ENCODE measurements at regions of chr12 and their contacts with region 1.

Region 1: GRCh38 chr12:112130441-112130998 is 5.2 kb downstream of the TRAFD1 start:
- DNase-seq: peak; percentile 70
- ATAC-seq: peak; percentile 67
- H3K4me3 ChIP-seq: peak overlapping the region; percentile 43
- H3K27ac ChIP-seq: peak overlapping the region; percentile 72
- H3K4me1 ChIP-seq: peaks cover 16% of the 10 kb centered on the region
- H3K27me3 ChIP-seq: no peaks in the 10 kb centered on the region
- CTCF ChIP-seq: no peak
- EP300 ChIP-seq: no peak
- POLR2A ChIP-seq: no peak
- RAD21 ChIP-seq: no peak

Region 2: GRCh38 chr12:112012775-112013600 is 117.5 kb before region 1 on chr12 and contains the starts of genes ERP29 and TMEM116:
- CTCF ChIA-PET with region 1: interaction called, 4 read pairs
- POLR2A ChIA-PET with region 1: interaction called, 17 read pairs
- RAD21 ChIA-PET with region 1: interaction called, 24 read pairs
- SMC1A ChIA-PET with region 1: interaction called, 28 read pairs
- in situ Hi-C with region 1: no loop called
- intact Hi-C with region 1: loop called (anchors 5 kb)
- DNase-seq: peak; percentile 98
- ATAC-seq: peak; percentile 82
- H3K4me3 ChIP-seq: peak within 1 kb of the TSS; percentile 97
- H3K27ac ChIP-seq: peak within 1 kb of the TSS; percentile 97
- H3K4me1 ChIP-seq: peaks cover 16% of the 10 kb centered on the region; the same call in 1 of the 2 replicates
- H3K27me3 ChIP-seq: no peaks in the 10 kb centered on the region
- CTCF ChIP-seq: peak; percentile 45 to 58 (median 50); a peak in 5 of 6 replicates
- EP300 ChIP-seq: 0 out of 4 replicates have a peak, but pooled peaks of 1 of the 2 experiments have one; percentile 10
- POLR2A ChIP-seq: peak; percentile 89
- RAD21 ChIP-seq: peak; percentile 34
- polyA plus RNA-seq, gene ERP29: 47.1 to 119 TPM
- polyA plus RNA-seq, gene TMEM116: 7.9 to 13.5 TPM

Region 3: GRCh38 chr12:112096667-112097066 is 33.9 kb before region 1 on chr12:
- CTCF ChIA-PET with region 1: interaction called, 4 read pairs
- POLR2A ChIA-PET with region 1: interaction called, 10 read pairs
- RAD21 ChIA-PET with region 1: interaction called, 4 read pairs
- SMC1A ChIA-PET with region 1: interaction called, 11 read pairs
- in situ Hi-C with region 1: no loop called
- intact Hi-C with region 1: no loop called
- DNase-seq: no peak
- ATAC-seq: peak; percentile 67
- H3K4me3 ChIP-seq: peak overlapping the region; percentile 29; the same call in 1 of the 2 replicates
- H3K27ac ChIP-seq: peak overlapping the region; percentile 75
- H3K4me1 ChIP-seq: peaks cover 20% of the 10 kb centered on the region
- H3K27me3 ChIP-seq: no peaks in the 10 kb centered on the region
- CTCF ChIP-seq: no peak
- EP300 ChIP-seq: no peak
- POLR2A ChIP-seq: no peak
- RAD21 ChIP-seq: no peak

Region 4: DNA sequence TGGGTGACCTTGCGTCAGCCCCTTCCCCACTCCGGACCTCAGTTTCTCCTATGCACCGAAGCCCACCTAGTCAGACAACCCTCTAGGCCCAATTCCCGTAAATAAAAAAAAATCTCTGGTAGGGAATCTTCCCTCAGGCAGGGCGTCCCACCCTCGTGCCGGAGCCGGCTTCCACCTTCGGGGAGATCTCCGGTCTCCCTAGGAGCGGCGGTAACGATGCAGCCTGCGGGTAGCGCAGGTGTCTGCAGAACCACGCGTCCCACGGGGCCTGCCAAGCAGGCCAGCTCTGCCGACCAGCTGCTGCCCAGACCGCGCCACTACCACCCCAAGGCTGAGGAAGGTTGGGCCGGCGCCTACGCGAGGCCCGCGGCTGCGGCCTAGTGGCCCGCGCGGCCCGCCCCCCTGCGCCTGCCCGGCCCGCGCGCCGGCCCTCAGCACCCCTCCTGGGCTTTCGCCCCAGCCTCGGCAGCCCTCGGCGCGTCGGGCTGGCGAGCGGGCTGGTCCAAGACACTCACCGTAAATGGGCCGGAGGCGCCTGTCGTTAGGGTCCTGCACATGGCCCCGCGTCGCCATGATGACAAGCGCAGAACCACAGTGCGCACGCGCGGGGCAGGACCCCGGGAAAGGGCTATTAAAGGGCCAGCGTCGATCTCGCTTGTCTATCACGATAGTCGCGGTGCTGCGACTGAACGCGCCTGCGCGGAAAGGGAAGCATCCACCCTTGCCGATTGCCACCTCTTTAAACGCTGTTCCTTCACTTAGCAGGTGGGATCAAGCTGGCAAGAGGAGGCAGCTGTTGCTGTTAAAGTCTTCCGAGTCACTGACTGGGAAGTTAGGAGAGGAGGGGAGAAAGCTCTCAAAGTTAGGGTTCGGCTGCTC is 22.1 kb before region 1 on chr12 and contains the start of gene NAA25:
- CTCF ChIA-PET with region 1: interaction called, 15 read pairs
- POLR2A ChIA-PET with region 1: interaction called, 161 read pairs
- RAD21 ChIA-PET with region 1: interaction called, 59 read pairs
- SMC1A ChIA-PET with region 1: interaction called, 72 read pairs
- in situ Hi-C with region 1: no loop called
- intact Hi-C with region 1: loop called (anchors 2 kb)
- DNase-seq: no peak
- ATAC-seq: peak; percentile 82
- H3K4me3 ChIP-seq: peak within 1 kb of the TSS; percentile 100
- H3K27ac ChIP-seq: peak within 1 kb of the TSS; percentile 98
- H3K4me1 ChIP-seq: peaks cover 8% of the 10 kb centered on the region; the same call in 1 of the 2 replicates
- H3K27me3 ChIP-seq: no peaks in the 10 kb centered on the region
- CTCF ChIP-seq: no peak
- EP300 ChIP-seq: no peak
- POLR2A ChIP-seq: peak; percentile 86
- RAD21 ChIP-seq: no peak
- polyA plus RNA-seq, gene NAA25: 15.0 to 32.1 TPM

Region 5: DNA sequence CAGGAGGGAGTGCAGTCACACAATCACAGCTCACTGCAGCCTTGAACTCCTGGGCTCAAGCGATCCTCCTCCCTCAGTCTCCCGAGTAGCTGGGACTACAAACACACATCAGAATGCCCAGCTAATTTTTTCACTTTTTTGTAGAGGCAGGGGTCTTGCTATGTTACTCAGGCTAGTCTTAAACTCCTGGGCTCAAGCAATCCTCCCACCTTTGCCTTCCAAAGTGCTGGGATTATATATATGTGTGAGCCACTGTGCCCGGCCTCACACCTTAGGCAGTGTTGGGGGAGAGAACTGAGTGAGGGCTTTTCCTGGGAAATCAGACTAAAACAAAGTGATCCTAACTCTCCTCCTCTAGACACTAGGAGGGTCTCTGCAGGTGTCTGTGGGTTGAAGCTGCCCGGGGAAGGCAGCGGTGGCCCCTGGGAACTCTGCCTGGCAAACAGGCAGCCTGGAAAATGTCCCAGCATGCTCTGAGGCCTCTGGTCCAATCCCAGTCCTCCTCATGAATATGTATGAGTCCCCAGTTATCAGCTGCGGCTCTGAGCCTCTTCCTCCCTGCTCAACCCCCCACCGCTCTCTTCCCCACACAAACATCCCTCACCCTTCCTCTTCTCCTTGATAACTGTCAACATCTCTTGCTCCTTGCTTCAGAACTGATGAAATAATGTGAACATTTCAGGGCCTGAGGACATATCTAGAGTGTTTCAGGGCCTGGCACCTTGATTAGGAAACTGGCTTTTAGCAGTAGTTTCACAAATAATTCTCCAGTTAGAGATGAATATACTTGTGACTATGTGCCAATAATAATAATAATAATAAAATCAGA is 14.1 kb before region 1 on chr12:
- CTCF ChIA-PET with region 1: interaction called, 7 read pairs
- POLR2A ChIA-PET with region 1: interaction called, 161 read pairs
- RAD21 ChIA-PET with region 1: interaction called, 5 read pairs
- SMC1A ChIA-PET with region 1: interaction called, 14 read pairs
- in situ Hi-C with region 1: no loop called
- intact Hi-C with region 1: no loop called
- DNase-seq: no peak
- ATAC-seq: peak; percentile 97
- H3K4me3 ChIP-seq: no peak overlapping the region
- H3K27ac ChIP-seq: no peak overlapping the region
- H3K4me1 ChIP-seq: peaks cover 5% of the 10 kb centered on the region; the same call in 1 of the 2 replicates
- H3K27me3 ChIP-seq: no peaks in the 10 kb centered on the region
- CTCF ChIP-seq: no peak
- EP300 ChIP-seq: no peak
- POLR2A ChIP-seq: no peak
- RAD21 ChIP-seq: no peak

Region 6: DNA sequence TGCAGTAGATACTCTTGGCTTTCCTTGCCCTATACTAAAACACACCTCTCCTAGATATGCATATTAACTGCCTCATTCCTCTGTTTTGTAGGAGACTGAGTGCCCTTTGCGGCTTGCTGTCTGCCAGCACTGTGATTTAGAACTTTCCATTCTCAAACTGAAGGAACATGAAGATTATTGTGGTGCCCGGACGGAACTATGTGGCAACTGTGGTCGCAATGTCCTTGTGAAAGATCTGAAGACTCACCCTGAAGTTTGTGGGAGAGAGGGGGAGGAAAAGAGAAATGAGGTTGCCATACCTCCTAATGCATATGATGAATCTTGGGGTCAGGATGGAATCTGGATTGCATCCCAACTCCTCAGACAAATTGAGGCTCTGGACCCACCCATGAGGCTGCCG is 10.2 kb after region 1 on chr12:
- CTCF ChIA-PET with region 1: interaction called, 4 read pairs
- POLR2A ChIA-PET with region 1: interaction called, 8 read pairs
- RAD21 ChIA-PET with region 1: interaction called, 5 read pairs
- SMC1A ChIA-PET with region 1: interaction called, 11 read pairs
- in situ Hi-C with region 1: no loop called
- intact Hi-C with region 1: no loop called
- DNase-seq: no peak
- ATAC-seq: no peak
- H3K4me3 ChIP-seq: no peak overlapping the region
- H3K27ac ChIP-seq: no peak overlapping the region
- H3K4me1 ChIP-seq: no peaks in the 10 kb centered on the region
- H3K27me3 ChIP-seq: no peaks in the 10 kb centered on the region
- CTCF ChIP-seq: no peak
- EP300 ChIP-seq: no peak
- POLR2A ChIP-seq: no peak
- RAD21 ChIP-seq: no peak

Region 7: DNA sequence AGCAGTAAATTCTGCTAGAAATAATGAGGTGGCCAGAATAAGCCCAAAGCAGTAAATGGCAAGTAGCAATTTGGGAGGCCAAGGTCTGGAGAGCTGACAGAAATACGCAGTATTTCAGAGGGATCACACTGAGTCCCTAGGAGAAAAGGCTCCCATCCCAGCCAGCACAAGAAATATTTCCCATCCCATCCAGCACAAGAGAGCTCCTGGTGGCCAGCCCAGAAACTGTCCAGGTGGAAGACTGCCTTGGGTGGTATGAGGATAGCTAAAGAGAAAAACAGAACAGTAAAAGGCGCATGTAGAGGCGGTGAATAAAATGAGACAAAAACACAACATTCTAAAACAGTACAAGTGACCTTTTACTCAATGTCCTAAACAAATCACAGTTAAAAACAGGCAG is 131.0 kb after region 1 on chr12:
- CTCF ChIA-PET with region 1: no interaction called
- POLR2A ChIA-PET with region 1: no interaction called
- RAD21 ChIA-PET with region 1: no interaction called
- SMC1A ChIA-PET with region 1: no interaction called
- in situ Hi-C with region 1: no loop called
- intact Hi-C with region 1: no loop called
- DNase-seq: no peak
- ATAC-seq: no peak
- H3K4me3 ChIP-seq: no peak overlapping the region
- H3K27ac ChIP-seq: no peak overlapping the region
- H3K4me1 ChIP-seq: no peaks in the 10 kb centered on the region
- H3K27me3 ChIP-seq: no peaks in the 10 kb centered on the region
- CTCF ChIP-seq: 0 out of 6 replicates have a peak, but pooled peaks of 1 of the 3 experiments have one; percentile 3
- EP300 ChIP-seq: no peak
- POLR2A ChIP-seq: no peak
- RAD21 ChIP-seq: no peak

Region 8: DNA sequence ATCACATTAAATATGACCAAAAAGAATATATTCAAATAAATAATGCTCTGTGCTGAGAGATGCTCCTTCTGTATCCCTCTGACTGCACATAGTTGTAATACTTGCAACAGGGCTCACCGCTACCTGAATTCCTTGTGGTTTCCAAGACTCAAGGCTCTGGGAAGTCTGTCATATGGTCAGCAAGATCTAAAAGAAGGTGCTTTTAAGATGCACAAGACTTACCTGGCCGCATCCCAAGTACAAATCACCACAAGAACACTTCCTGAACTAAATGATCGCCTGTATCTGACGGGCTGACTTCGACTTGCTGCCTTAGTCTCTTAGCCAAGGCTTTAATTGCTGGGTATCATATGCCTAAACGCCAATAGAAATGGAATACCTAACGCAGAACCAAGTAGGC is 184.5 kb after region 1 on chr12:
- CTCF ChIA-PET with region 1: no interaction called
- POLR2A ChIA-PET with region 1: no interaction called
- RAD21 ChIA-PET with region 1: no interaction called
- SMC1A ChIA-PET with region 1: no interaction called
- in situ Hi-C with region 1: no loop called
- intact Hi-C with region 1: no loop called
- DNase-seq: no peak
- ATAC-seq: no peak
- H3K4me3 ChIP-seq: no peak overlapping the region
- H3K27ac ChIP-seq: no peak overlapping the region
- H3K4me1 ChIP-seq: peaks cover 5% of the 10 kb centered on the region
- H3K27me3 ChIP-seq: no peaks in the 10 kb centered on the region
- CTCF ChIP-seq: no peak
- EP300 ChIP-seq: no peak
- POLR2A ChIP-seq: no peak
- RAD21 ChIP-seq: no peak

Region 9: DNA sequence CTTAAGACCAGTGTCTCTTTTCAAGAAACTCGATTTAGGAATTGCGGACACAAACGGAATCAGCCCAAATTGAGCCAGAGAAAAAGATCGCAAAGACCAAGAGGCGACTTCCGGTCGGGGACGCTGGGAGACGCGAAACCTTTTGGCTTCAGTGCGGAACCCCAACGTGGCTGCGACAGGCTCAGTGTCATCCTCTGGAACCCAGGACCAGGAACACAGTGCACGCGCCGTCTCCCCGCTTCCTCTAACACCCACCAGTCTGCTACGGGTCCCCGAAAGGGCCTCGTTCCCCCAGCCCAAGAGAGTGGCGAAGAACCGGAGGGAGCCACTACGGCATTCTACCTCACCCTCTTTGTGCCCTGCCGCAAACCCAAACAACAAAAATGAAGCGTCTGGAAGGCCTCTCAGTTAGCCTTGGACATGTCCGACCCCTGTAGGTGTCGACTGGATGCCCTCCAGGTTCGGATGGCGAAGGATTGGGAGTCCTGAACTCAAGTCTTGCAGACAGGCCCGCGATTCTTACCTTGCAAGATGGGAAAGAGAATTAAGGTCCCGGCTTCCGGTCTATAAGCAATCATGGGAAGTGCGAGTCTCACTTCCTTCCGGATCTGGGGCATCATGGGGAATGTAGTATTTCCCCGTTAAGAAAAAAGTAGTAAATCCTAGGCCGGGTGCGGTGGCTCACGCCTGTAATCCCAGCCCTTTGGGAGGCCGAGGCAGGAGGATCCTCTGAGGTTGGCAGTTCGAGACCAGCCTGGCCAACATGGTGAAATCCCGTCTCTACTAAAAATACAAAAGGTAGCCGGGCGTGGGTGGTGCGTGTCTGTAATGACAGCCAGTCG is 278.8 kb after region 1 on chr12 and contains the start of gene RPL6:
- CTCF ChIA-PET with region 1: interaction called, 10 read pairs
- POLR2A ChIA-PET with region 1: no interaction called
- RAD21 ChIA-PET with region 1: no interaction called
- SMC1A ChIA-PET with region 1: interaction called, 4 read pairs
- in situ Hi-C with region 1: no loop called
- intact Hi-C with region 1: no loop called
- DNase-seq: peak; percentile 79
- ATAC-seq: peak; percentile 88
- H3K4me3 ChIP-seq: peak within 1 kb of the TSS; percentile 95
- H3K27ac ChIP-seq: peak within 1 kb of the TSS; percentile 97
- H3K4me1 ChIP-seq: no peaks in the 10 kb centered on the region
- H3K27me3 ChIP-seq: no peaks in the 10 kb centered on the region; a peak in 1 of 4 replicates
- CTCF ChIP-seq: no peak
- EP300 ChIP-seq: no peak
- POLR2A ChIP-seq: peak; percentile 94
- RAD21 ChIP-seq: no peak
- polyA plus RNA-seq, gene RPL6: 1,828 to 2,204 TPM

Measured in GM12878 (cell line).